Right lobe of liver (tissue), 6 donors: ENCODE measurements at regions of chr20 and their contacts with region 1.

Region 1: GRCh38 chr20:46350201-46350985 is 42.1 kb upstream of the CDH22 start:
- DNase-seq: no peak
- ATAC-seq: peak in 1 of 4 donors; percentile 11
- H3K4me3 ChIP-seq: no peak overlapping the region
- H3K27ac ChIP-seq: no peak overlapping the region
- H3K4me1 ChIP-seq: peaks cover 0 to 5% (median 2%) of the 10 kb centered on the region in 4 donors
- H3K27me3 ChIP-seq: no peaks in the 10 kb centered on the region
- CTCF ChIP-seq: no peak
- POLR2A ChIP-seq: no peak

Region 2: DNA sequence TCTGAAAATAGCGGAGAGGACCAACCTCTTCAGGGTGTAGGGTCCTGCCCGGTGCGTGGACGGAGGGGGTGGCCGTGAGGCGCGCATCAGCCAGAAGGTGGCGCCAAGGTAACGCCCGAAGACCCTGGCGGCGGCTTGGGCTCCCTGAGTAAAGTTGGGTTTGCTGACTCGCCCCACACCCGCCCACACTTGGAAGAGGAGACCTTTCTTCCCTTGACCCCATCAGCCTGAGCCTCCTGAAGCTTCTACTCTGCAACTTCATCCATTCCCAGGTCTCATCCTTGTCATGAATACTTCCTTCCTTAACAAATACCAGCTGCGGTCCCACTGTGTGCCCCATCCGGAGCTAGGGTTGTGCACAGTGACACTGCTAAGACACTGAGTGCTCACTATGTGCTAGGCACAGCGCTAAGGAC is 217.7 kb before region 1 on chr20:
- intact Hi-C with region 1: loop called in 1 of 2 experiments (anchors 10 kb)
- DNase-seq: peak; percentile 57 to 72 (median 64)
- ATAC-seq: peak; percentile 80 to 93 (median 88)
- H3K4me3 ChIP-seq: no peak overlapping the region
- H3K27ac ChIP-seq: no peak overlapping the region
- H3K4me1 ChIP-seq: no peaks in the 10 kb centered on the region
- H3K27me3 ChIP-seq: no peaks in the 10 kb centered on the region
- CTCF ChIP-seq: peak; percentile 71 to 78 (median 76)
- POLR2A ChIP-seq: no peak

Region 3: DNA sequence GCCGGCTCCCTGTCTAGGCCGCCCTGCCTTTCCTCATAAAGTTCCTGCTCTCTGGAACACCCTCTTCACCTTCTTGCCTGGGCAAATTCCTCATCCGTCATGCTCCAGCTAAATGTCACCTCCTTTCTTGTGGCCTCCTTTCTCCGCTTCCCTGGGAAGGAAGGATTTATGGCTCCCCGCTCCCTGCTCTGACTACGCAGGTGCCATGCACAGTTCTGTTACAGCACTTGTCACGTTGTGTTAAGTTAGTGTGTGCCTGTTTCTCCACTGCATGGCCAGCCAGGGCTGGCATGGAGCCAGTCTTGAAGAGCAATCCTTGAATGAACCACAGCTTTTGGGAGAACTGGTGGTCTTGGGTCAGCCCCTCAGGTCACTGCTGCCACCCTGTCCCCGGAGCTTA is 170.5 kb before region 1 on chr20:
- intact Hi-C with region 1: no loop called
- DNase-seq: no peak
- ATAC-seq: no peak
- H3K4me3 ChIP-seq: no peak overlapping the region
- H3K27ac ChIP-seq: no peak overlapping the region
- H3K4me1 ChIP-seq: no peaks in the 10 kb centered on the region
- H3K27me3 ChIP-seq: no peaks in the 10 kb centered on the region
- CTCF ChIP-seq: no peak
- POLR2A ChIP-seq: no peak

Region 4: GRCh38 chr20:46307139-46307998 is 43.0 kb before region 1 on chr20:
- intact Hi-C with region 1: loop called in 1 of 2 experiments (anchors 10 kb)
- DNase-seq: peak in 2 of 3 donors; percentile 66 to 70
- ATAC-seq: peak; percentile 73 to 79 (median 78)
- H3K4me3 ChIP-seq: peak overlapping the region in 1 of 3 donors; percentile 38
- H3K27ac ChIP-seq: no peak overlapping the region
- H3K4me1 ChIP-seq: peaks cover 0 to 25% (median 4%) of the 10 kb centered on the region in 4 donors
- H3K27me3 ChIP-seq: peaks cover under 1 to 17% of the 10 kb centered on the region in 2 donors
- CTCF ChIP-seq: peak; percentile 77 to 88 (median 82)
- POLR2A ChIP-seq: no peak

Region 5: GRCh38 chr20:46400828-46401477 is 50.6 kb after region 1 on chr20:
- intact Hi-C with region 1: no loop called
- DNase-seq: no peak
- ATAC-seq: peak in 2 of 4 donors; percentile 2 to 15
- H3K4me3 ChIP-seq: no peak overlapping the region
- H3K27ac ChIP-seq: peak overlapping the region; percentile 51 to 63 (median 63)
- H3K4me1 ChIP-seq: peaks cover 0 to 46% (median 28%) of the 10 kb centered on the region in 4 donors
- H3K27me3 ChIP-seq: no peaks in the 10 kb centered on the region
- CTCF ChIP-seq: no peak
- POLR2A ChIP-seq: no peak